ENCODE measurements at regions of chr12 and their contacts with region 1.

Region 1: GRCh38 chr12:57046947-57047890 is 2.7 kb downstream of the MYO1A start:
- DNase-seq: peak in 2 of 3 donors; percentile 42 to 53
- H3K4me3 ChIP-seq: no peak overlapping the region
- H3K27ac ChIP-seq: no peak overlapping the region
- H3K4me1 ChIP-seq: peaks cover 0 to 28% (median 7%) of the 10 kb centered on the region in 4 experiments
- H3K27me3 ChIP-seq: no peaks in the 10 kb centered on the region

Region 2: DNA sequence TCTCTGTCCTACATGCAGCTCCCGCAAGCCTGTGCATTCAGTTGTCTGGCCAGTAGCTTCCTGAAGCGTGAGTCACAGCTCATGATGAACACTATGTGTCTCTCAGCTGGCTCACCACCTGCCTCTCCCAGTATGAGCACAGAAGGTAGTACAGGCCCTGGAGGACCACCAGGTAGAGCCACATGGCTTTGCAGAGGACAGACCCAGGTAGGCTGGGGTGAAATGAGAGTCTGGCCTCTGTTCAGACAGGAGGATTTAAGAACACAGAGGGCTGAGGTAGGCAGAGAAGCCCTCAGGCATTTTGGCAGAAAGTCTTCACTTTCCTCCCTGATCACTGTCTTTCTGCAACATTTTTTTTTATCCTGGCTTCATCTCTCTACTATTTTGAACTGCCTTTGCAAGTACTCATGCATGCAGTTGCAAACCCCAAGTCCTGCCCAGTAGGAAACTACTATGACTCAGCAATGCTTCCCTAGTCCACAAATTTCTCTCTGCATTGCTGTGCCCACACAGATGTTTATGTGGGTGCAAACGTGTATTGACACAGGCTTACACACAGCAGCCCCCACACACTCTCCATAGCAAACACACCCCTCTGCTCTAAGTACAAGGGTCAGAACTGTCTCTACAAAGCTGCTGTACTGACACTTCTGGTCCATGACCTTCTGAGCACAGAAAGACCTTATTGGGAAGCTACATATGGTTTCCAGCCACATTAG is 105.8 kb before region 1 on chr12:
- CTCF ChIA-PET with region 1: no interaction called
- POLR2A ChIA-PET with region 1: no interaction called
- DNase-seq: peak in 2 of 3 donors; percentile 70 to 86
- H3K4me3 ChIP-seq: no peak overlapping the region
- H3K27ac ChIP-seq: no peak overlapping the region
- H3K4me1 ChIP-seq: peaks cover 0 to 14% (median 13%) of the 10 kb centered on the region in 4 experiments
- H3K27me3 ChIP-seq: no peaks in the 10 kb centered on the region

Region 3: DNA sequence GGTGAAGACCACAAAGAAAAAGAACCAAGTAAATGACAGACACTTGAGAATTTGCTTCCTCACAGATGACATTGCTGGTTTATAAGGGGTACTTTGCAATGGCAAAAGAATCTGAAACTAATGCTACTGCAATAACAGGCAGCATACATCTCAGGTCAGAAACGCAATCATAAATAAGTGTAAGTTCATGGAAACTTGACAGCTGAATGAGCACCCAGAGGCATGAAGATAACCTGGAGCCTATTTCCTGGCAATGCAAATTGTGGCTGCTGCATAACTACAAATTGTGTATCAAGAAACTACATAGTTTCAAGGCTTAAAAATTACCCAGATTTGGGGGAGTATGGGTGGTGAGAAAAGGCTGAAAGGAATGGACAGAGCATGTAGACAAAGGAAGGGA is 11.2 kb after region 1 on chr12:
- CTCF ChIA-PET with region 1: interaction called, 56 read pairs
- POLR2A ChIA-PET with region 1: no interaction called
- DNase-seq: no peak
- H3K4me3 ChIP-seq: no peak overlapping the region
- H3K27ac ChIP-seq: peak overlapping the region in 1 of 2 experiments; percentile 1
- H3K4me1 ChIP-seq: no peaks in the 10 kb centered on the region
- H3K27me3 ChIP-seq: no peaks in the 10 kb centered on the region